HEK293 (cell line): ENCODE measurements at regions of chr6 and their contacts with region 1.

Region 1: DNA sequence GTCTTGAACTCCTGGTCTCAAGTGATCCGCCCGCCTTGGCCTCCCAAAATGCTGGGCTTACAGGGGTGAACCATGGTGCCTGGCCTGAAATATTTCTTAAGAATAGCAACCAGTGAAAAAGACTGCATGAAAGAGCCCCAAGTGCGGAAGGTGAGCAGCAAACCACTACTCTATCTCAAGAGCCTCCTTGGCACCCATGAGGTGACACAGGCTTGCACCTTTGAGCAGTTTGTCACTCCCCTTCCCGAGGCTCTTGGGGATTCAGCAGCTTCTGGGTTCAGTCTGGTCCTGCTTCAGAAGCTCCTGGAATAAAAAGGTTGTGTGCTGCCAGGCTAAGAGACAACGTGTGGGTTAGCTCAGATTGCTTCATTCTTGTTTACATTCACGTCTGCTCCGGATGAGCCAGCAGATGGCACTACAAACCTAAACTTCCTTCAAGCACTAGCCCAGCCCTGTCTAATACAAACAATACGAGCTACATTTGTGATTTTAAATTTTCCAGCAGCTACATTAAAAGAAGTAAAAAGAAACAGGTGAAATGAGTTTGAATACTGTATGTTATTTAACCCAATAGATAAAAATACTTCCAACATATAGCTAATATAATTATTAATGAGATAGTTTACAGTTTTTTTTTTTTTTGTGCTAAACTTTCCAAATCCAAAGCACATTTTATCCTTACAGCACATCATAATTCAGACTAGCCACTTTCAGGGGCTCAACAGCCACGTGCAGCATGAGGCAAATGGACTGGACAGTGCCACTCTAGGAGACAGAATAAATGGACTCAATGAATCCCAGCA is 46.2 kb downstream of the GJA10 start:
- H3K4me3 ChIP-seq: no peak overlapping the region
- H3K27ac ChIP-seq: no peak overlapping the region
- H3K4me1 ChIP-seq: no peaks in the 10 kb centered on the region
- CTCF ChIP-seq: peak; percentile 63; the same call in 1 of the 2 replicates

Region 2: GRCh38 chr6:89952686-89953085 is 12.3 kb after region 1 on chr6:
- CTCF ChIA-PET with region 1: interaction called, 16 read pairs
- POLR2A ChIA-PET with region 1: no interaction called
- H3K4me3 ChIP-seq: no peak overlapping the region
- H3K27ac ChIP-seq: no peak overlapping the region
- H3K4me1 ChIP-seq: no peaks in the 10 kb centered on the region
- CTCF ChIP-seq: no peak

Region 3: GRCh38 chr6:89986650-89987074 is 46.2 kb after region 1 on chr6:
- CTCF ChIA-PET with region 1: interaction called, 12 read pairs
- POLR2A ChIA-PET with region 1: interaction called, 3 read pairs
- H3K4me3 ChIP-seq: no peak overlapping the region
- H3K27ac ChIP-seq: no peak overlapping the region
- H3K4me1 ChIP-seq: peaks cover 3% of the 10 kb centered on the region; the same call in 1 of the 2 replicates
- CTCF ChIP-seq: no peak

Region 4: GRCh38 chr6:90008908-90009501 is 68.6 kb after region 1 on chr6:
- CTCF ChIA-PET with region 1: no interaction called
- POLR2A ChIA-PET with region 1: no interaction called
- H3K4me3 ChIP-seq: no peak overlapping the region
- H3K27ac ChIP-seq: no peak overlapping the region
- H3K4me1 ChIP-seq: no peaks in the 10 kb centered on the region
- CTCF ChIP-seq: no peak

Region 5: DNA sequence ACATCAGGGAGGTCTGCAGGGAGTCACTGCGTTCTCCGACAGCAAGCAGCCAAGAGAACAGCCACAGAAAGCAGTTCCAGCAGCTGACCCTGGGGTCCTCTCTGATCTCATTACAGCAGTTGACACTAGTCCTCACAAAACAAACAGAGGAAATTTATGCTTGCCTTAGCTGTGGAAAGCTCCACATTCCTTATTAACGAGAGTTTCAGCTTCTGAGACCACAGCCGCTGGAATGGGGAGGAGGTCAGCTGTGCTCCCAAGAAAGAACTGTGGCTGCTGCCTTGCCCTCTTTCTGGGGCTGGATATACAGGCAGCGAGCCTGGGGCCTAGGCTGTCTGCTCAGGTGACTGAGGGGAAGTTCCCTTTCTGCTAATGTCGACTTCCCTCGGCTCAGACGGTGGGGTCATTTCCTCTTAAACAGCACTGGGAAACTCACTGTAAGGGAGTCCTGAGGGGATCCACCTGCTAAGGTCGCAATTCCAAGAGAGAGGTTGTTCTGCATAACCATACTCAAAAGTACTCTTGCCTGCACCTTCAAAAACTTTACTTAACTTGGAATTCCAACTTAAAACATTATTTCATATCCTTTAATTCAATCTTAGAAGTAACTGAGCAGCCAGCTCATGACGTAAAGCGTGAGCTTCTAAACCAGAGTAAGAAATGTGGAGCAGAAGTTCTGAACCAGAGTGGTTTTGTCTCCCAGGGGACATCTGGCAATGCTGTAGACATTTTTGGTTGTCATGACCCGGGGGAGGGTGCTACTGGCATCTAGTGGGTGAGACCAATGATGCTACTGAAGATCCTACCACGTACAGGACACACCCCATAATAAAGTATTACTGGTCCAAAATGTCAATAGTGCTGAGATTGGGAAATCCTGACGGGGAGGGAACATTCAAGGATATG is 275.9 kb after region 1 on chr6:
- CTCF ChIA-PET with region 1: interaction called, 24 read pairs
- POLR2A ChIA-PET with region 1: no interaction called
- H3K4me3 ChIP-seq: no peak overlapping the region
- H3K27ac ChIP-seq: peak overlapping the region; percentile 48; the same call in 1 of the 2 replicates
- H3K4me1 ChIP-seq: peaks cover 51% of the 10 kb centered on the region
- CTCF ChIP-seq: 0 out of 2 replicates have a peak, but pooled peaks have one; percentile 16

Region 6: DNA sequence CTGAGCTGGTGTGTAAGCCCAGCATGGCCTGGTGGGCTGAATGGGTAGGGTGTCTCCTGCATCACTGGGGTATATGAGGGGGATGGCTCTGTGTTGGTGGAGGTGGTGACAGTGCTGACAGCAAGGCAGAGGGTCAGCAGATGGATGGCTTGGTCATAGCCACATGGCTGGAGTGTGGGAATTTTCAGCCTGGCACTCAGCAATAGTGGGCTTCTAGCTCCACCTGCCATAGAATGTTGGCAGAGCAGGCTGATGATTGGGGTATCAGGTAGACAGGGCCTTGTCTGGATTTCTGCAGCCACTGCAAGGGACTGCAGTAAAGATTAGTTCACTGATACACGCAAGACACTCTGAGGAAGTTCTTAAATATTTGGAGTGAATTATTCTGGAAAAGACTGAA is 493.7 kb after region 1 on chr6:
- CTCF ChIA-PET with region 1: interaction called, 10 read pairs
- POLR2A ChIA-PET with region 1: no interaction called
- H3K4me3 ChIP-seq: no peak overlapping the region
- H3K27ac ChIP-seq: no peak overlapping the region
- H3K4me1 ChIP-seq: no peaks in the 10 kb centered on the region
- CTCF ChIP-seq: no peak